ENCODE measurements at regions of chr7 and their contacts with region 1.

Region 1: GRCh38 chr7:121081327-121081936 is 92.9 kb downstream of the CPED1 start:
- DNase-seq: peak; percentile 22
- CTCF ChIP-seq: peak; percentile 46

Region 2: DNA sequence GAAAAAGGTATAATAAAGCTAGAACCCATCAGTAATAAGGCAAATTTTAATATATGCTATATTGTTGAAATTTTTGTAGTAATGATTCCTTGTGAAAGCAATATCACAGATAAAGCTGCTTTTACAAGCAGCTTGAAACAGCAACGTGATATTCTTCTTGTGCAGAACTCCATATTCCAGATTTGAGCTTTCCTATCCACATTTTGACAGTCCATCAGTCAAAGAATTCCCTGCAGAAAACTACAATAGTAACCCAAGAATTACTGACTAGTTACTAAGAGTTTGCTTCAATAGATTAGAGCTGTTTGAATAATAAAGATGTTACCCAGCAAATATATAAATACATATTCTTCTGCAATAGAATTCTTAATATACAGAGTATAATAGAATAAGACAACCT is 517.3 kb before region 1 on chr7:
- CTCF ChIA-PET with region 1: no interaction called
- POLR2A ChIA-PET with region 1: no interaction called
- DNase-seq: no peak
- CTCF ChIP-seq: no peak

Region 3: GRCh38 chr7:120987683-120988590 is 93.5 kb before region 1 on chr7:
- CTCF ChIA-PET with region 1: interaction called, 72 read pairs
- POLR2A ChIA-PET with region 1: no interaction called
- DNase-seq: peak; percentile 82
- CTCF ChIP-seq: peak; percentile 95

Region 4: DNA sequence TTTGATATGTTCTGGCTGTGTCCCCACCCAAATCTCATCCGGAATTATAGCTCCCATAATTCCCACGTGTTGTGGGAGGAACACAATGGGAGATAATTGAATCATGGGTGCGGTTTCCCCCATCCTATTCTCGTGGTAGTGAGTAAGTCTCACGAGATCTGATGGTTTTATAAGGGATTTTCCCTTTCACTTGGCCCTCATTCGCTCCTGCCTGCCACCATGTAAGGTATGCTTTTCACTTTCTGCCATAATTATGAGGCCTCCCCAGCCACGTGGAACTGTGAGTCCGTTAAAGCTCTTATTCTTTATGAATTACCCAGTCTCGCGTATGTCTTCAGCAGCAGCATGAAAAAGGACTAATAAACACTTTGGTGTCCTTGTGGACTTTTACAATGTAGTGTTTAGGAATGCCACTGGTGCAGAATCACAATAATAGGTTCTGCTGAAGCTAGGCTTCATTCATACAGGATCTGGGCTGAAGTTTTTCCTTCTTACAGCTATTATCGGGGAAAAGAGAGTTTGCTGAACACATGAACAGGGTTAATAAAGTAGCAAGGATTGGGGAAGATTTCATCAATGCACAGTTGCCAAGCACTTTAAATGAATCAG is 18.7 kb before region 1 on chr7:
- CTCF ChIA-PET with region 1: interaction called, 12 read pairs
- POLR2A ChIA-PET with region 1: no interaction called
- DNase-seq: no peak
- CTCF ChIP-seq: no peak

Region 5: DNA sequence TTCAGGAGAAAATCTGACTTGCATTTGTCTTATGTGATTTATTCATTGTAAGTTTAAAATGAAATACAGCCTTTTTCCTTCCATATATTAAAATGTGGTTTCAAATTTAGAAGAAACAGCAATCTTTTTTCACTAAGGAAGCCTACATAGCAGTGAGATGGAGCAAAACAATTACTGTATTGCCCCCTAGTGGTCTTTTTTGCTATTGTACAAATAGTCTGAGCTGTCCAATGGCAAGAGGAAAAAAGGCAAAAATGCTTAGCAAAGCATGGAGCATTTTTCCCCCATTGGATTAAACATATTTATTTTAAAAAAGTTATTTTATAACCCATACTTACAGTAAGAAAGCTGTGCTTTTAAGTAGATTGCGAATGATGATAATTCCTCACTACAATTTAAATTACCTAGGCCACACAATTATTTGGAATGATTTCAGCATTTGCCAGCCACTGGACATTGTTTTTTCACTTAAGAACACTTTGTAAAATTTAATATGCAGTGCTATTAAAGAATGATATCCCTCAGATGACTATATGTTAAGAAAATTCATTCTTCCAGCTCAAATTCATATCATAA is 26.6 kb after region 1 on chr7:
- CTCF ChIA-PET with region 1: interaction called, 18 read pairs
- POLR2A ChIA-PET with region 1: no interaction called
- DNase-seq: peak; percentile 24
- CTCF ChIP-seq: peak; percentile 72

Region 6: DNA sequence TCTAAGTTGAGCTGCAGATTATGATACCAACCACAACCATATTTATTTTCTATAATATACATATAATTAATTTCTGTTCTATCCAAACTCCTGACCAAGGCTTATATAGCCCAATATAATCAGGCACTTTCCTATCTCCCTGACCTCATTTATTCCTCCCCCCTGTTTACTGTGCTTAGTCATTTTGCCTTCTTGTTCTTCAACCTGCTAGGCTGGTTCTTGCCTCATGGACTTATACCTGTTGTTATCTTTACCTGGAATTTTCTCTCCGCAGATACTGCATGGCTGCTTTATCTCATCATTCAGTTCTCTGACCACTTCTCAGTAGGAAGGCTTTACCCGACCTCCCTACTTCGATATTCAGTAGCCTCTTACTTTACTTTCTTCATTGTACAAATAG is 339.5 kb after region 1 on chr7:
- CTCF ChIA-PET with region 1: no interaction called
- POLR2A ChIA-PET with region 1: no interaction called
- DNase-seq: no peak
- CTCF ChIP-seq: no peak